Esophagus muscularis mucosa (tissue), 4 donors: ENCODE measurements at regions of chr15 and their contacts with region 1.

Region 1: GRCh38 chr15:56918046-56918938 is at the start of gene TCF12:
- DNase-seq: peak; percentile 98
- H3K4me3 ChIP-seq: peak within 1 kb of the TSS; percentile 96 to 100 (median 98)
- H3K27ac ChIP-seq: peak within 1 kb of the TSS; percentile 96 to 98 (median 97)
- H3K4me1 ChIP-seq: peaks cover 34 to 62% (median 56%) of the 10 kb centered on the region in 4 donors
- H3K27me3 ChIP-seq: no peaks in the 10 kb centered on the region
- CTCF ChIP-seq: peak; percentile 45 to 53 (median 47)
- EP300 ChIP-seq: no peak
- POLR2A ChIP-seq: peak; percentile 35
- total RNA-seq, gene TCF12: 108 to 177 (median 148) TPM

Region 2: GRCh38 chr15:56886932-56887781 is 31.1 kb before region 1 on chr15:
- intact Hi-C with region 1: loop called (anchors 1 kb)
- DNase-seq: peak; percentile 95
- H3K4me3 ChIP-seq: peak overlapping the region; percentile 68 to 81 (median 74)
- H3K27ac ChIP-seq: peak overlapping the region; percentile 94 to 99 (median 96)
- H3K4me1 ChIP-seq: peaks cover 21 to 25% (median 22%) of the 10 kb centered on the region in 4 donors
- H3K27me3 ChIP-seq: no peaks in the 10 kb centered on the region
- CTCF ChIP-seq: no peak
- EP300 ChIP-seq: no peak
- POLR2A ChIP-seq: peak; percentile 49

Region 3: GRCh38 chr15:57138349-57138788 is 220.1 kb after region 1 on chr15:
- intact Hi-C with region 1: loop called (anchors 5 kb)
- DNase-seq: no peak
- H3K4me3 ChIP-seq: no peak overlapping the region
- H3K27ac ChIP-seq: no peak overlapping the region
- H3K4me1 ChIP-seq: peaks cover 15 to 39% (median 36%) of the 10 kb centered on the region in 4 donors
- H3K27me3 ChIP-seq: no peaks in the 10 kb centered on the region
- CTCF ChIP-seq: peak; percentile 69 to 86 (median 73)
- EP300 ChIP-seq: no peak
- POLR2A ChIP-seq: no peak

Region 4: DNA sequence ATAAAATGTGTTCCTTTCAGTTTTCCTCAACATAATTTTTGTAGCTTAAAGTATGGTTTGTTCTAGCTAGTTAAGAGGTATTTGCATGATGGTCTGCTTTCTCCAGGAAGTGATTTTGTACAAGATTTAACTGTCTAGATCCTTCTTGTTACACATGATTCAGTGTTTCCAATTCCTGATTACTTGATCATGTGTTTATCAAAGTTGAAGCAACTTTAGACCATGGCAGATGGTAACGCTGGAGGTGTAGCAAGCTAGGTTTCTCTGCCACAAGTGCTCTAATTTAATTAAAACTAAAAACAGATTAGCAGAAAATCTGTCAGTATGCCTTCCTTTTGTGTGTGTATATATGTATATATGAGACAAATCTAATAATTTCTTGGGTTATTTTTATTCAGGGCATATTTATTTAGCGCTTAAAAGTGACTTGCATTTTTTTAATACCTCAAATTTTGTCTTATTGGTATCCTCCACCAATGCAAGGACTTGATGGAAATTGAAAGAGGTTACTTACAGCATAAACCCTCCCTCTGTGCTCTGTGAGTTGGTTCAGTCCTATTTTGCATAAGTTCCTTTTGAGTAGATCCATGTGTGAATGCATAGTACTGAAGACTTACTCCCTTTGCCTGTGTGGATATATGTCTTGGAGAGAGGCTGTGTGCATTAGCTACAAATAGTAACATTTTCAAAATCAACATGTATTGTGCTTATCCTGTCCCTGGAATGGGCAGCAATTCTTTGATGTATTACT is 300.7 kb after region 1 on chr15:
- intact Hi-C with region 1: loop called (anchors 5 kb)
- DNase-seq: no peak
- H3K4me3 ChIP-seq: peak overlapping the region in 1 of 4 donors; percentile 20
- H3K27ac ChIP-seq: no peak overlapping the region
- H3K4me1 ChIP-seq: peaks cover 21 to 75% (median 56%) of the 10 kb centered on the region in 4 donors
- H3K27me3 ChIP-seq: no peaks in the 10 kb centered on the region
- CTCF ChIP-seq: no peak
- EP300 ChIP-seq: no peak
- POLR2A ChIP-seq: no peak

Region 5: DNA sequence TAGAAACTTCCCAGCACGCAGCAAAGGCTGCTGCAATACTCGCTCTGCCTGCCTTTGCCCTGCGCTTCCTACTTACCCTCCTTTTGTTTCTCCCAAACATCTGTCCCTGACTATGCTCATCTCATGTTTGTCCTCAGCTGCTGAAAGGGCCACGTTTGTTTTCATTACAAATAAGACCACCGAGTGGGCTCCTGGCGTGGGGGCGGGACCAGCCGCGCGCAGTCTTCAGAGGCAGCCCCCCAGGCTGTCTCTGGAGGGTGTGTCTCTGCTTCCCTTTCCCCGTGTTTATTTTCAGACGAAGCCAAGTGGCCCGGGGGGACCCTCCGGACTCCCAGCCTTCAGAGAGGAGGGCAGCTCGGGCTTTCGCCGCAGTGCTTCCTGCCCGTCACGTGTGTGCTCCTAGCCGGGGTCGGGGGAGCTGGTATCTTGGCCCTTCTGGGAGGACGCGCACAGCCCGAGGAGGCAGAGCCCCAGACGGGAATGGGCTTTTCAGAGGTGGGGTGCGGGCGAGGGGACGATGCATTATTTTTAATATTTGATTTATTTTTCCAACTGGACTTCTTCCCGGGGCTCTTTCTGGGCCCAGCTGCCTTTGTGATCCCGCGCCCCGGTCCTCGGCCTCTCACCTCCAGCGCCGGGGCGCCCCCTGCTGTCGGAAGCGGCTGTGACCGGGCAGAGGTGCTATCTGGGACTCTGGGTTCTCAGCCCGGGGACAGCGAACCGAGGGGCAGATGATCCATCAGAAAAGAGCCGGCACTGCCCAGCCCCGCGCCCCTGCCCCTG is 388.1 kb after region 1 on chr15:
- intact Hi-C with region 1: loop called (anchors 10 kb)
- DNase-seq: peak; percentile 97
- H3K4me3 ChIP-seq: peak overlapping the region; percentile 52 to 69 (median 64)
- H3K27ac ChIP-seq: peak overlapping the region in 2 of 4 donors; percentile 2 to 43
- H3K4me1 ChIP-seq: peaks cover 6 to 21% (median 16%) of the 10 kb centered on the region in 4 donors
- H3K27me3 ChIP-seq: no peaks in the 10 kb centered on the region
- CTCF ChIP-seq: peak; percentile 76 to 90 (median 85)
- EP300 ChIP-seq: no peak
- POLR2A ChIP-seq: no peak